GM10248 (cell line): ENCODE measurements at regions of chr22 and their contacts with region 1.

Region 1: GRCh38 chr22:22884010-22884887 is 3.4 kb upstream of the IGLL5 start:
- DNase-seq: peak; percentile 77
- CTCF ChIP-seq: peak; percentile 85

Region 2: GRCh38 chr22:22687638-22688500 is 196.4 kb before region 1 on chr22:
- CTCF ChIA-PET with region 1: interaction called, 12 read pairs
- POLR2A ChIA-PET with region 1: no interaction called
- DNase-seq: peak; percentile 37
- CTCF ChIP-seq: peak; percentile 77

Region 3: DNA sequence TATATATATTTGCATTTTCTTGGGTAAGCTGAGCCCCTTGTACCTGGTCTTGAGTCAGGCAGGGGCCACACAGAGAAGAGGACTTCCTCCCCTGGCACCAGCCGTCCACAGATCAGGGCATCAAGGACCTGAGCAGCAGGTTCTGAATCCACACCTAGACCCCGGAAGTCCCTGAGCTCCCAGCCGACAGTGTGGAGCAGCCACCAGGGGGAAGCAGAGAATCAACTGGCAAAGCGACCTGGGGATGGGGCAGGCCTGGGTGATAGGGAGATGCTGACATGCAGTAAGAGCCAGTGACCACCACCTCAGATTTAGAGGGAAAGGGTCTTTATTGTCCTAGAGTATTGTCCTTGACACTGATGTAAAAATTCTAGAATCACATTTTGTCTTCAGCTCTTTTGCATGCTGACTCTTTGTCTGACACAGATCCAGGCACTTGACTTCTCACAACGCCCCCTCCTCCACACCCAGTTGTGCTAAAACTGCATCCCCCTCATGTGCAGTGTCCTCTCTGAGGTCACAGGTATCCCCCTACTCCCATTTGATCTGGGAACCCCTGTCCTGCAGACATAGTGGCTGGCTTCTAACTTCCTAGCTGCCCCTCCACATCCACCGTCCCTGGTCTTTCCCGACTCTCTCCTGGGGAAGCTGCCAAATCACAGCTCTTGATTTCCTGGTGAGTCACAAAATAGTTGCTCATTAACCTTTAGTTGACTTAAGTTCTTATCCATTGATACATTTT is 130.6 kb before region 1 on chr22:
- CTCF ChIA-PET with region 1: interaction called, 62 read pairs
- POLR2A ChIA-PET with region 1: no interaction called
- DNase-seq: peak; percentile 87
- CTCF ChIP-seq: peak; percentile 89

Region 4: DNA sequence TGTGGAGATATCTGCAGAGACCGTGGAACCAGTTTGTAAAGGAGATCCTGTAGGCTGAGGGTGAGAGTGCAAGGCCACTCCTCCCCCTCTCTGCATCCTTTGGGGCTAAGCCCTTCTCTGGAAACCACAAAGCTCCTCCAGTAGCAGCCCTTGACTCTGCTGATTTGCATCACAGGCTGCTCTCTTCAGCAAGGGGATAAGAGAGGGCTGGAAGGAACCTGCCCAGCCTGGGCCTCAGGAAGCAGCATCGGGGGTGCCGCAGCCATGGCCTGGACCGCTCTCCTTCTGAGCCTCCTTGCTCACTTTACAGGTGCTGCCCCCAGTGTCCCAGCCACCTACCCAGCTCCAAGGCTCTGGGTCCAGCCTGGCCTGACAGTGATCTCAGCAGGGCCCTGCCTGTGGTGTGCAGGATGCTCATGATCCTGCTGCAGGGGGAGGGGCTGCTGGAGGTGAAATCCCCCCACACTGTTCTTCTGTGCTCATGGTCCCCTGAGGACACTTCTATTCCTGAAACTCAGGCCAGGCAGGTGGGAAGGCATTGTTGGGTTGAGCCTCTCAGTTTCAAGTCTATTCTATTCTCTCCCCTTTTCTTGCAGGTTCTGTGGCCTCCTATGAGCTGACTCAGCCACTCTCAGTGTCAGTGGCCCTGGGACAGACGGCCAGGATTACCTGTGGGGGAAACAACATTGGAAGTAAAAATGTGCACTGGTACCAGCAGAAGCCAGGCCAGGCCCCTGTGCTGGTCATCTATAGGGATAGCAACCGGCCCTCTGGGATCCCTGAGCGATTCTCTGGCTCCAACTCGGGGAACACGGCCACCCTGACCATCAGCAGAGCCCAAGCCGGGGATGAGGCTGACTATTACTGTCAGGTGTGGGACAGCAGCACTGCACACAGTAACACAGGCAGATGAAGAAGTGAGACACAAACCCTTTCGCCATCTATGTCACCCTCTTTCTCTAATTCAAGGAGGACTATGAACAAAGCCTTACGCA is 65.1 kb before region 1 on chr22:
- CTCF ChIA-PET with region 1: interaction called, 16 read pairs
- POLR2A ChIA-PET with region 1: no interaction called
- DNase-seq: peak; percentile 60
- CTCF ChIP-seq: no peak

Region 5: DNA sequence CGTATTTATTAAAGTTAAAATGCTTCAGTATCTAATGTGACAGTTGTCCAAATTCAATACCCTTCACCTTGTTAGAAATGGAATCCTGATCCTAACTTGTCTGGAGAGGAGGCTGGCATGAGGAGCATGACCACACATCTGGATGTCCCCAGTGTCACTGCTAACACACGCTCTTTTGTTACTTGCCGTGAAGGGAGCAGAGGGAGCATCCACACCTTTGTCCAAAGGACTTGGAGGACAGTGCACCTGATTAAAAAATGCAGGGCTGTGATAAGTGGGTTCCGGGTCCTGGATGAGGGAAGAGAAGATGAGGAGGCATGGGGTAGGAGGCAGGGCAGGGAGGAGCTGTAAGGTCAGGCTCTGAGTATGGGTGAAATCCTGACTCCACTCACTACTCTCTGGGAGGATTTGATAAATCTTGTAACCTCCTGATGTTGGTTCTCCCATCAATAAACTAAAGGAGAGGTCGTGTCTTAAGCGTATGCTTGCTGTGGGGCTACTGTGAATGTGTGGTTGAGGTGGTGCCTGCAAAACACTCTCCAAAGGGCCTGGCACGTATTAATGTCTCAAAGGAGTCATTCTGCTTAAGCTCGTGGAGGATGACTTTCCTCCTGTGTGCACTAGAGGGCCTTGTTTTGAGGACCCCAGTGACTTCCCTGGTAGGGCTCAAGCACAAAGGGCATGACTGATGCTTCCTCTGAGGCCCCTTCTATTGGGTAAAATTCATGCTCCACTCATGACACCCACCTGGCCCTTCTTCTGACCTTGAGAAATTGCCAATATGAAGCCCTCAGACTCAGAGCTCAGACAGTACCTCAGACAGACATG is 13.5 kb before region 1 on chr22:
- CTCF ChIA-PET with region 1: interaction called, 34 read pairs
- POLR2A ChIA-PET with region 1: interaction called, 3 read pairs
- DNase-seq: no peak
- CTCF ChIP-seq: peak; percentile 38

Region 6: GRCh38 chr22:22942511-22943329 is 58.5 kb after region 1 on chr22:
- CTCF ChIA-PET with region 1: interaction called, 55 read pairs
- POLR2A ChIA-PET with region 1: no interaction called
- DNase-seq: peak; percentile 69
- CTCF ChIP-seq: peak; percentile 69

Region 7: DNA sequence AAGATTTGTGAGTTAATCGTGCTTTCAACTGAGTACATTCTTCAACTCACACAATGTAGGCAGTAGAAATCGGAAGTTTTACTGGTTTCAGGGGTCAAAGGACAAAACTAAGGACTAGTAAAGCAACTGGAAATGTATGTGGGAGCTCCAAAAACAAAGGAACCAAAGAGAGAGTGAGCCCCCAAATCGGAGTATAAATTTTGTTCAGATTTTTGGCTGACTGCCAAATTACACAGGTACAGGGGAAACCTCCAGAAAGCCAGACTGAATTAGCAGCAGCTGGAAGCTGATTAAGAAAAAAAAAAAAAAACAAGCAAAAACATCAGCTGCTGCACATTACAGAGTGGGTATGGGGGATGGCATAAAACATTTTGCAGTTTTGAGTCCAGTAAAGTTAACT is 110.9 kb after region 1 on chr22:
- CTCF ChIA-PET with region 1: no interaction called
- POLR2A ChIA-PET with region 1: no interaction called
- DNase-seq: no peak
- CTCF ChIP-seq: no peak

Region 8: DNA sequence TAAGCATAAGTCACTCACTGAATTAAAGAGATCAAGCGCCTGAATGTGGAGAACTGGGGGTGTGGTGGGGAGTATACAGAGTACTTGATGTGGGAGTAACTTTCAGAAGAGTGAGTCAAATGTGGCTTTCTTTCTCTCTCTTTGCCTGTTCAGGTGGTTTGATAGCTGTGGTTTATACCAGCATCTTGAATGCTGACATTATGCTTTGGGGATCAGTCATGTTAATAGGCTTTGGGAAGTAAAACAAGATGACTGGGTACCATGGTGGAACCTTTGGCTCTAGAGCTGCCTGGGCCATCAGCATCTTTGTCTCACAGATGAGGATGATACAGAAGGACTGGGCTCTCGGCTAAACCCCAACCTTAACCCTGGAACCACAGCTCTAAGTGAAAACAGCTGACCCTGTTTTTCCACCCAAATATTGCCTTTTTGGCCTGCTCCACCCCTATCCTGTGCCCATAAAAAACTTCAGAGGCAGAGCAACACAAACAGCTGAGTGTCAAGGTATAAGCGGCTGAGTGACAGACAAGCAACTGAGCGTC is 127.9 kb after region 1 on chr22:
- CTCF ChIA-PET with region 1: no interaction called
- POLR2A ChIA-PET with region 1: no interaction called
- DNase-seq: peak; percentile 56
- CTCF ChIP-seq: no peak

Region 9: DNA sequence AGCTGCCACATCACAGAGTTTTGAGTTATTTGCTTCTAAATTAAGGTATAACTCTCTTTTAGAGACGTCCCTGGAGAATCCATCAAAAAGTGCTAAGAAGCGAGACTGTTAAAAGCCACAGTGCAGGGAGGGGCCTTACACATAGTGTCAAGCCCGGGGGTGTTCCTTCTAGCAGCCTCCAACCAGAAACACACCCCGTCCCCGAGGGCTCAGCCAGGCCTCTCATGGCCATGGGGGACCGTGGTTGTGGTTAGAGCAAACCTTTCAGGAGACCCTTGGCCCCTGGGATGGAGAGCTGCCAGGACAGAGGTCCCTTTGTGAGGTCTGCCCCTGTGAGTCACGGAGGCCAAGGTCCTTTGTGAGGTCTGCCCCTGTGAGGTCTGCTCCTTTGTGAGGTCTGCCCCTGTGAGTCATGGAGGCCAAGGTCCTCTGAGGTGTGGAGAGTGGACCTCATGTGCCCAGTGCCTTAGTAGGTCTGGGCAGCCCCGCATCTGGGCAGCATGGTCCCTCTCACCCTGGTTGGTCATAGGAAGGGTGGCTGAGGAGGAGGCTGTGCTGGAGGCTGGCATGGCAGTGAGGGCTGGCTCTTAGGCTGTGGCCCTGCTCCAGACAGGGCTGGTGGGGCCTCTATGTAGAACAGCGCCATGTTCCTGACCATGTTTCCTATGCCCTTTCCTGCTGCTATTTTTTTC is 191.4 kb after region 1 on chr22:
- CTCF ChIA-PET with region 1: no interaction called
- POLR2A ChIA-PET with region 1: no interaction called
- DNase-seq: no peak
- CTCF ChIP-seq: no peak